ENCODE measurements at regions of chr7 and their contacts with region 1.

Region 1: GRCh38 chr7:22001345-22002004 is 55.8 kb upstream of the CDCA7L start:
- DNase-seq: peak; percentile 34 to 68
- H3K4me3 ChIP-seq: peak overlapping the region; percentile 16; the same call in 1 of the 2 replicates
- H3K27ac ChIP-seq: no peak overlapping the region
- H3K4me1 ChIP-seq: 0 out of 2 replicates have a peak, but pooled peaks cover 10% of the 10 kb centered on the region
- H3K27me3 ChIP-seq: peaks cover 22% of the 10 kb centered on the region
- CTCF ChIP-seq: peak; percentile 100

Region 2: GRCh38 chr7:21256310-21256877 is 745.1 kb before region 1 on chr7:
- CTCF ChIA-PET with region 1: no interaction called
- POLR2A ChIA-PET with region 1: no interaction called
- intact Hi-C with region 1: loop called (anchors 5 kb)
- DNase-seq: peak in 1 of 2 experiments; percentile 43
- H3K4me3 ChIP-seq: no peak overlapping the region
- H3K27ac ChIP-seq: no peak overlapping the region
- H3K4me1 ChIP-seq: no peaks in the 10 kb centered on the region
- H3K27me3 ChIP-seq: no peaks in the 10 kb centered on the region
- CTCF ChIP-seq: peak; percentile 92

Region 3: DNA sequence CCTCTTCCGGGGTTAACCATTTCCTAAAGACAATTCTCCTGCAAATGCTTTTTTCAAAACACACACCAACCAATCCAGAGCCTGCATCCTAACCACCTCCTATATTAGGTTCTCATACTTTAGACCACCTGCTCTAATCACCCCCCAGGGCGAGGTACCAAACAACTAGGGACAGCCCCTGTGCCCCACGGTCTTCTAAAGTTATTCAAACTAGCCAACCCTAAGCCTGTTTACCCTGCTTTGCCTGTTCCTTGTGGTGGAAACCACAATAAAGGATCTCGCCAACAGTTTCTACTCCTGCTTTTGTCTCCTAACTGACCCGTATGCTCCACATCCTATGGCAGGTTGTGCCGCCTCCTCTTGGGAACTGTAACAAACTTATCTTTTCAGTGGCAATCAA is 552.5 kb before region 1 on chr7:
- CTCF ChIA-PET with region 1: no interaction called
- POLR2A ChIA-PET with region 1: no interaction called
- intact Hi-C with region 1: no loop called
- DNase-seq: no peak
- H3K4me3 ChIP-seq: no peak overlapping the region
- H3K27ac ChIP-seq: no peak overlapping the region
- H3K4me1 ChIP-seq: no peaks in the 10 kb centered on the region
- H3K27me3 ChIP-seq: no peaks in the 10 kb centered on the region
- CTCF ChIP-seq: no peak

Region 4: GRCh38 chr7:21507626-21508343 is 493.7 kb before region 1 on chr7:
- CTCF ChIA-PET with region 1: no interaction called
- POLR2A ChIA-PET with region 1: no interaction called
- intact Hi-C with region 1: loop called (anchors 5 kb)
- DNase-seq: peak in 1 of 2 experiments; percentile 34
- H3K4me3 ChIP-seq: no peak overlapping the region
- H3K27ac ChIP-seq: no peak overlapping the region
- H3K4me1 ChIP-seq: peaks cover 10% of the 10 kb centered on the region
- H3K27me3 ChIP-seq: no peaks in the 10 kb centered on the region
- CTCF ChIP-seq: peak; percentile 89

Region 5: GRCh38 chr7:21767300-21767900 is 234.1 kb before region 1 on chr7:
- CTCF ChIA-PET with region 1: no interaction called
- POLR2A ChIA-PET with region 1: no interaction called
- intact Hi-C with region 1: loop called (anchors 1 kb)
- DNase-seq: peak; percentile 55 to 87
- H3K4me3 ChIP-seq: no peak overlapping the region
- H3K27ac ChIP-seq: no peak overlapping the region
- H3K4me1 ChIP-seq: no peaks in the 10 kb centered on the region
- H3K27me3 ChIP-seq: no peaks in the 10 kb centered on the region
- CTCF ChIP-seq: peak; percentile 97

Region 6: GRCh38 chr7:21912305-21912704 is 89.2 kb before region 1 on chr7:
- CTCF ChIA-PET with region 1: interaction called, 20 read pairs
- POLR2A ChIA-PET with region 1: no interaction called
- intact Hi-C with region 1: loop called (anchors 5 kb)
- DNase-seq: no peak
- H3K4me3 ChIP-seq: no peak overlapping the region
- H3K27ac ChIP-seq: no peak overlapping the region
- H3K4me1 ChIP-seq: no peaks in the 10 kb centered on the region
- H3K27me3 ChIP-seq: no peaks in the 10 kb centered on the region
- CTCF ChIP-seq: no peak

Region 7: DNA sequence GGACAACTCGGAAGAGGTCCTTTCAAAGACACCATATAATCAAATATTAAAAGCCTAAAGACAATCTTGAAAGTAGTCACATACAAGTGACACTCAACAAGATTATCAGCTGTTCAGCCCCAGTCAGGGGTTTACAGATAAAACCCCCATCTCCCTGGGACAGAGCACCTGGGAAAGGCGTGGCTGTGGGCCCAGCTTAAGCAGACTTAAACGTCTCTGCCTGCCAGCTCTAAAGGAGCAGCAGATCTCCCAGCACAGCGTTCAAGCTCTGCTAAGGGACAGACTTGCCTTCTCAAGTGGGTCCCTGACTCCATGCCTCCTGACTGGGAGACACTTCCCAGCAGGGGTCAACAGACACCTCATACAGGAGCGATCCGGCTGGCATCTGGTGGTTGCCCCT is 73.8 kb before region 1 on chr7:
- CTCF ChIA-PET with region 1: no interaction called
- POLR2A ChIA-PET with region 1: no interaction called
- intact Hi-C with region 1: no loop called
- DNase-seq: no peak
- H3K4me3 ChIP-seq: no peak overlapping the region
- H3K27ac ChIP-seq: no peak overlapping the region
- H3K4me1 ChIP-seq: no peaks in the 10 kb centered on the region; the same call in 1 of the 2 replicates
- H3K27me3 ChIP-seq: no peaks in the 10 kb centered on the region
- CTCF ChIP-seq: no peak

Region 8: DNA sequence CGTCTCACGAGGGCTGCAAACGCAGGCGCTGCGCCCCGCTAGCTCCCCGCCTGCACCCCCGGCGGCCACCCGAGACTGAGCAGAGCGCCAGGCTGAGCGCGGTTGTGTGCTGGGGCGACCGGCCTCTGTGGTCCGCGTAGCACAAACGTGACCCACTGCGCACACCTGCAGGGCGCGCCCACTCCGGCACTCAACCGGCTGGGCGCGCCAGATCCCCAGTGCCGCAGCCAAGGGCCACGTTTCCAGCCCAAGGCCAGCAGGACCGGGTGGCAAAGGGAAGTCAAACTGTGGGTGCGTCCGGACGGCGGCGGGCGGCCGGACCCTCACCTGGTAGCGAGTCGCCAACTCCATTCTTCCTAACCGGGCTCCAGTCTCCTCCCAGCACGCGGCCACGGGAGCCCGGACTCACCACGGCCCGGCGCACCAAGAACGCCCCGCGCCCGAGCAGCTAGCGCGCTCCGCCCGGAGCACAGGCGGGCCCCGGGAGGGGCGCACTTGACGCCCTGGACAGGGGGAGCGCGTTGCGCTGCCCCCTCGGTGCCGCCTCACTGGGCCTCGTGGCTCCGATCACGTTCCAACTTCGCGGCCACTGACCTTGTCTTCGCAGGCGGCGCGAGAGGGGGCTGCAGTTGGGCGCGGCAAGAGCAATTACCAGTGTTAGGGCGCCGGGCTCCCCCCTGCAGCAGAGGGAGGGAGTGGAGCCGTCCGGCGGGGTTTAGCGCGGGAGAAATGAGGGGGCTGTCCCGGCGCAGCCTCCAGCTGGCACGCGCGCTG is 55.8 kb before region 1 on chr7 and contains the start of gene CDCA7L:
- CTCF ChIA-PET with region 1: no interaction called
- POLR2A ChIA-PET with region 1: interaction called, 4 read pairs
- intact Hi-C with region 1: loop called (anchors 1 kb)
- DNase-seq: peak; percentile 79 to 95
- H3K4me3 ChIP-seq: peak within 1 kb of the TSS; percentile 91
- H3K27ac ChIP-seq: peak within 1 kb of the TSS; percentile 94
- H3K4me1 ChIP-seq: peaks cover 53% of the 10 kb centered on the region
- H3K27me3 ChIP-seq: no peaks in the 10 kb centered on the region
- CTCF ChIP-seq: no peak
- total RNA-seq, gene CDCA7L: 243 and 252 TPM in 2 replicates

Region 9: GRCh38 chr7:22016507-22016906 is 15.0 kb after region 1 on chr7:
- CTCF ChIA-PET with region 1: no interaction called
- POLR2A ChIA-PET with region 1: no interaction called
- intact Hi-C with region 1: no loop called
- DNase-seq: no peak
- H3K4me3 ChIP-seq: no peak overlapping the region
- H3K27ac ChIP-seq: no peak overlapping the region
- H3K4me1 ChIP-seq: no peaks in the 10 kb centered on the region
- H3K27me3 ChIP-seq: peaks cover 86% of the 10 kb centered on the region
- CTCF ChIP-seq: no peak

Region 10: DNA sequence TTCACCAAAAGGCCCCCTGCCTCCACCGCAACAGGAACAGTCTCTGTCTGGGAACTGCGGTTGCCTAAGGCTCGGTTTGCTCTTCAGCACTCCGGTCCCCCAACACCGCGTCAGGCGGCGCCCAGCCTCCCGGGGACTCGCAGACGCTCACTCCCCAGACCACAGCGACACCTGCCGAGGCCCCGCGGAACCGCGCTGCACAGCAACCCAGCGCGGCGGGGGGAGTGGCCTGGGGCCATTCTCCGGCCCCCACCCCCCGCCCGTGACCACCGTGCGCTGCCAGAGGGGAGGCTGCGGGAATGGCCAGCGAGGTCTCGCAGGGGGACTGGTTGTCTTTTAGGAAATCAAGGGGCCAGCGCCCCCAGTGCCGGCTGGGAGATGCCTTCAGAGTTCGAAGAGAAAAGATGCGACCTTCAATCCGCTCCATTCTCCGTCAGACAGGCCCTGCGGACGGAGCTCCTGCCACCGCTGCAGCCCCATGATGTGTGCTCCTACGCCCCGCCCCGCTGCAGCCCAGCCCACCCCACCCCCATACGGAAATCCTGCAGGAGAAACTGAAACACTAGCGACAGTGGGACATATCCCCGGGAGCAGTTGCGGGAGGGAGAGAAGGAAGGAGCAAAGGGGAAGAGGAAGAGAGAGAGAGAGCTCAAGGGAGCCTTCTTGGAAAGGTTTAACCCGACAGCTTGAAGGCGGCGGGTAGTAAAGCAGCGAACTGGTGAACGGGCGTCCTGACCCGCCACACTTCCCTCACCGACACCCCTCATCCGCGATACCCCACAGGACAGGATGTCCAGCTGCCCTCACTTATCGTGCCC is 81.6 kb after region 1 on chr7:
- CTCF ChIA-PET with region 1: no interaction called
- POLR2A ChIA-PET with region 1: no interaction called
- intact Hi-C with region 1: loop called (anchors 5 kb)
- DNase-seq: peak; percentile 64 to 90
- H3K4me3 ChIP-seq: peak overlapping the region; percentile 65
- H3K27ac ChIP-seq: no peak overlapping the region
- H3K4me1 ChIP-seq: peaks cover 11% of the 10 kb centered on the region; the same call in 1 of the 2 replicates
- H3K27me3 ChIP-seq: peaks cover 43% of the 10 kb centered on the region
- CTCF ChIP-seq: peak; percentile 99

Region 11: DNA sequence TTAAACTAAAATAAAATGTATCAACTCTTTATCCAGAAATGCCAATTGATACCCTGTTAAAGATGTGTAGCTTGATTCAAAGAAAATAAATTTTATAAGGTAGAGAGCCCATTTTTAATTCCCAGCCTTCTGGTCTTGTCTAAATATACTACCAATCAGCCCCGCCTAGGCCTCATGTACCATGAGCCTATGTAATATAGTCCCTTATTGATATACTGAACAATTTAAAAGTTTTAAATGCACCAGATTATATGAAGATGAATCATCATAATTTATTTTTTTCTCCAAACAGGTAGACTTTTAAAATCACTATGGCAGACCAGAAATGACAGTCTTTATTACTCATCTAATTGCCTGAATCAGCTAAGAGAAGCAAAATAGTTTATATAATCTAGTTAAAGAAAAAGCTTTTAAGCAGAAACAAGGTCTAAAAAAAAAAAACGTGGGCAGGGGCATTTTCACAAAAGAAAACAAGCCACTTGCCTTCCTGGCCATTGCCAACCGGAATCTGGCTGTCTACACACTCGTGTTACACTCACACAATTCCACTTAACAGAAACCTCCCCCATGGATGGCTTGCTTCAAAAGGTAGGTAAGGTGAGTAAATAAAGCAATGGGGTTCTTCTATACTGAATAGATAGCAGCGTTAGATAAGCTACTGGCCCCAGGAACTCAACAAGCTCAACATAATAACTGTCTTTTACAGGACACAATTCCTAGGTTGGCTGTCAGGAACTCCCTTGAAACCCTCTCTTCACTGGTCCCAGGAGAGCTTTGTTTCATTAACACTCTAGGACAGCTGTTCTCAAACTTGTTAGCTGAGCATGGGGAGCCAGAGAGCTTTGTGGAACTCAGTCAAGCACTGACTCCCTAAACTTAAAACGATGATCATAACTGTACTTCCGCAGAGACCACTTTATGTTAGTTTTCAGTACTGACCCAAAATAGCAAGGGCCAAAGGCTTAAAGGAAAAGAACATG is 318.2 kb after region 1 on chr7:
- CTCF ChIA-PET with region 1: no interaction called
- POLR2A ChIA-PET with region 1: no interaction called
- intact Hi-C with region 1: no loop called
- DNase-seq: no peak
- H3K4me3 ChIP-seq: no peak overlapping the region
- H3K27ac ChIP-seq: no peak overlapping the region
- H3K4me1 ChIP-seq: no peaks in the 10 kb centered on the region
- H3K27me3 ChIP-seq: no peaks in the 10 kb centered on the region
- CTCF ChIP-seq: no peak

Measured in PC-9 (cell line).